Testis (tissue), 5 donors: ENCODE measurements at regions of chr2 and their contacts with region 1.

Region 1: GRCh38 chr2:238716585-238716984 is 131.3 kb upstream of the TWIST2 start:
- DNase-seq: peak; percentile 13
- H3K4me3 ChIP-seq: no peak overlapping the region
- H3K27ac ChIP-seq: no peak overlapping the region
- H3K4me1 ChIP-seq: no peaks in the 10 kb centered on the region
- H3K27me3 ChIP-seq: no peaks in the 10 kb centered on the region
- CTCF ChIP-seq: no peak
- POLR2A ChIP-seq: no peak

Region 2: GRCh38 chr2:238761868-238762267 is 45.3 kb after region 1 on chr2:
- intact Hi-C with region 1: loop called (anchors 2 kb)
- DNase-seq: no peak
- H3K4me3 ChIP-seq: no peak overlapping the region
- H3K27ac ChIP-seq: no peak overlapping the region
- H3K4me1 ChIP-seq: no peaks in the 10 kb centered on the region
- H3K27me3 ChIP-seq: no peaks in the 10 kb centered on the region
- CTCF ChIP-seq: no peak
- POLR2A ChIP-seq: no peak

Region 3: GRCh38 chr2:238846628-238847418 is 130.2 kb after region 1 on chr2:
- intact Hi-C with region 1: no loop called
- DNase-seq: no peak
- H3K4me3 ChIP-seq: peak overlapping the region; percentile 60 to 81
- H3K27ac ChIP-seq: peak overlapping the region; percentile 72 to 84
- H3K4me1 ChIP-seq: no peaks in the 10 kb centered on the region
- H3K27me3 ChIP-seq: no peaks in the 10 kb centered on the region
- CTCF ChIP-seq: no peak
- POLR2A ChIP-seq: no peak